ENCODE measurements at regions of chr1 and their contacts with region 1.

Region 1: GRCh38 chr1:1788646-1789431 is 10.6 kb upstream of the NADK start:
- DNase-seq: peak in 1 of 2 experiments; percentile 64
- H3K4me3 ChIP-seq: no peak overlapping the region
- H3K27ac ChIP-seq: no peak overlapping the region
- H3K4me1 ChIP-seq: no peaks in the 10 kb centered on the region
- H3K27me3 ChIP-seq: no peaks in the 10 kb centered on the region
- CTCF ChIP-seq: peak; percentile 63 to 87 (median 79)
- EP300 ChIP-seq: no peak
- POLR2A ChIP-seq: no peak
- RAD21 ChIP-seq: peak; percentile 36 to 55

Region 2: GRCh38 chr1:1777950-1778662 is 10.7 kb before region 1 on chr1 and contains the start of gene NADK:
- CTCF ChIA-PET with region 1: interaction called, 21 read pairs
- POLR2A ChIA-PET with region 1: interaction called, 11 read pairs
- DNase-seq: peak in 1 of 2 experiments; percentile 79
- H3K4me3 ChIP-seq: peak within 1 kb of the TSS; percentile 66 to 91 (median 77)
- H3K27ac ChIP-seq: peak within 1 kb of the TSS; percentile 76
- H3K4me1 ChIP-seq: peaks cover 3 to 44% (median 28%) of the 10 kb centered on the region in 4 experiments
- H3K27me3 ChIP-seq: no peaks in the 10 kb centered on the region
- CTCF ChIP-seq: no peak
- EP300 ChIP-seq: no peak
- POLR2A ChIP-seq: no peak
- RAD21 ChIP-seq: no peak
- total RNA-seq, gene NADK: 80.1 and 89.7 TPM in 2 replicates

Region 3: GRCh38 chr1:1858382-1859086 is 69.7 kb after region 1 on chr1:
- CTCF ChIA-PET with region 1: no interaction called
- POLR2A ChIA-PET with region 1: no interaction called
- DNase-seq: no peak
- H3K4me3 ChIP-seq: no peak overlapping the region
- H3K27ac ChIP-seq: no peak overlapping the region
- H3K4me1 ChIP-seq: peaks cover 0 to 8% (median 4%) of the 10 kb centered on the region in 4 experiments; a peak in 3 of 7 replicates
- H3K27me3 ChIP-seq: no peaks in the 10 kb centered on the region
- CTCF ChIP-seq: peak; percentile 18 to 52 (median 50); a peak in 3 of 4 replicates
- EP300 ChIP-seq: no peak
- POLR2A ChIP-seq: no peak
- RAD21 ChIP-seq: peak; percentile 17 to 42; a peak in 2 of 4 replicates